ENCODE measurements at regions of chr4 and their contacts with region 1.

Region 1: GRCh38 chr4:122666527-122667245 is 45.8 kb upstream of the IL21 start:
- DNase-seq: peak; percentile 41
- ATAC-seq: peak; percentile 58
- H3K4me3 Mint-ChIP-seq: peak overlapping the region; percentile 27
- H3K27ac Mint-ChIP-seq: peak overlapping the region; percentile 95
- H3K4me1 Mint-ChIP-seq: peaks cover 82% of the 10 kb centered on the region
- H3K27me3 Mint-ChIP-seq: no peaks in the 10 kb centered on the region

Region 2: GRCh38 chr4:122508083-122508482 is 158.6 kb before region 1 on chr4:
- CTCF ChIA-PET with region 1: no interaction called
- POLR2A ChIA-PET with region 1: no interaction called
- intact Hi-C with region 1: loop called in 1 of 2 experiments (anchors 2 kb)
- DNase-seq: no peak
- ATAC-seq: peak; percentile 77
- H3K4me3 Mint-ChIP-seq: peak overlapping the region; percentile 64
- H3K27ac Mint-ChIP-seq: peak overlapping the region; percentile 92
- H3K4me1 Mint-ChIP-seq: peaks cover 84% of the 10 kb centered on the region
- H3K27me3 Mint-ChIP-seq: peaks cover 2% of the 10 kb centered on the region

Region 3: GRCh38 chr4:122542411-122543236 is 124.1 kb before region 1 on chr4:
- CTCF ChIA-PET with region 1: no interaction called
- POLR2A ChIA-PET with region 1: no interaction called
- intact Hi-C with region 1: loop called (anchors 2 to 5 kb)
- DNase-seq: no peak
- ATAC-seq: peak; percentile 63
- H3K4me3 Mint-ChIP-seq: peak overlapping the region; percentile 53
- H3K27ac Mint-ChIP-seq: peak overlapping the region; percentile 95
- H3K4me1 Mint-ChIP-seq: peaks cover 94% of the 10 kb centered on the region
- H3K27me3 Mint-ChIP-seq: no peaks in the 10 kb centered on the region

Region 4: DNA sequence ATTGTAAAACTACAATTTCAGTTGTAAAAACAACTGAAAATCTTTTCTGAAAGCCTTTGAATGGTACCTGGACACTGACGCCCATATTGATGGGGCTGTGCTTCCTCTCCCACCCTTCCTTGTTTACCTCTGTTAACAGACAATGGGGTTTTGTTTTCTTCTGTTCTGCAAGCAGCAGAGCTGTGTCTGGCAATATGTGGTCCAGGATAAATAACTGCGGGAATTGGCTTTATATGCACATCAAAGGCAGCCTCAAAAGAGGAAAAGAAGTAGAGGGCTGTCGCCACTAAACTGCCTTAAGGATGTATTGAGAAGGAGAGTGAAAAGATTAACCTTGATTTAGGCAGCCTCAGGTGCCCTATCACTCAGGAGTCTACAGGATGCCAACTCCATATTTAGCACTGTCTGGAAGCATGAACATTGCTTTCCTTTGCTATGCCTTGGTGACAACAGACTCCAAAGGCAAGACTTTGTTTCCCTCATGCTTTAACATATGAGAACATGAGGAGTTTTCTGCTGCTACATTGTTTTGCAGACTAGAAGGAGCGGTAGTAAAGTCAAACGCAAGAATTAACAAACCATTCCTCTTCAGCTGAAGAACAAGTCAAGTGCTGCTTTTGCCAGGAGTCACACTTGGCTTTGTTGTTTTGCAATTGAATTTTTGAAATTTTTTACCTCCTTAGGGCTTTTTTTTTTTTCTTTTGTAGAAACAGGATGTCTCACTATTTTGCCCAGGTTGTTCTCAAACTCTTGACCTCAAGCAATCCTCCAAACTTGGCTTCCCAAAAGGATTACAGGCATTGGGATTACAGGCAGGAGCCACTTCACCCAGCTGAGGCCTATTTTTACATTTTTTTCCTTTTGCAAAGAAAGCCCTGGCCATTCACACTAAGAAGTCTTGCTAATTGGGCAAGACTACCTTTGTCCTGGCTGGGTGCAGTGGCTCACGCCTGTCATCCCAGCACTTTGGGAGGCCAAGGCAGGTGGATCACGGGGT is 48.8 kb before region 1 on chr4:
- CTCF ChIA-PET with region 1: interaction called, 4 read pairs
- POLR2A ChIA-PET with region 1: no interaction called
- intact Hi-C with region 1: loop called (anchors 1 to 2 kb)
- DNase-seq: no peak
- ATAC-seq: no peak
- H3K4me3 Mint-ChIP-seq: peak overlapping the region; percentile 80
- H3K27ac Mint-ChIP-seq: peak overlapping the region; percentile 87
- H3K4me1 Mint-ChIP-seq: peaks cover 62% of the 10 kb centered on the region
- H3K27me3 Mint-ChIP-seq: no peaks in the 10 kb centered on the region

Region 5: GRCh38 chr4:122689972-122690371 is 23.3 kb after region 1 on chr4:
- CTCF ChIA-PET with region 1: interaction called, 4 read pairs
- POLR2A ChIA-PET with region 1: no interaction called
- intact Hi-C with region 1: loop called in 1 of 2 experiments (anchors 2 kb)
- DNase-seq: peak; percentile 49
- ATAC-seq: peak; percentile 81
- H3K4me3 Mint-ChIP-seq: no peak overlapping the region
- H3K27ac Mint-ChIP-seq: peak overlapping the region; percentile 58
- H3K4me1 Mint-ChIP-seq: peaks cover 68% of the 10 kb centered on the region
- H3K27me3 Mint-ChIP-seq: peaks cover 4% of the 10 kb centered on the region

Region 6: DNA sequence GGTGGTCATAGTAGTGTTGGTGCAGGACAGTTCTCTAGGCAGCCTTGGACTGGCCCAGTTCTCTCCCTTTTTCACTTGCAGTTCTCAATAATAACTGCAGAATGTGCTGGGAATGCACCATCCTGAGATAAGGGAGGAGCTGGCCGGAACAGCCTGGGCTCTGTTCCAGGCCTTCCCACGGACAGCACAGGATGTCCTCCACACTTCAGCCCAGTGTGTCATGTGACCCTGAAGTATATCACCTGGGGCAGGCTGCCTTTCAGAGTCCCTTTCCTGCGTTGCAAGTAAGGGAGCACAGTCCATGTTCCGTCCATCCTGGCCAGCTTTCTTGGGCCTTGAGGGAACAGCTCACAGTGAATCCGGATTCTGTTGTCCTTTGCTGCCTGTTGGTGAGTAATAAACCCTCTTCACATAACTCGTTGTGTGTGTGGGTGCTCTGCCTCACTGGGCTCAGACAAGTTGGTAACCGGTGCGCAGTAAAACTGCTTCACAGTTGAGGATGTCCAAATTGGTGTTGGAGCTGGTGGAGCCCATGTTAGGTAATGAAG is 33.6 kb after region 1 on chr4:
- CTCF ChIA-PET with region 1: interaction called, 3 read pairs
- POLR2A ChIA-PET with region 1: interaction called, 5 read pairs
- intact Hi-C with region 1: loop called (anchors 1 kb)
- DNase-seq: no peak
- ATAC-seq: peak; percentile 8
- H3K4me3 Mint-ChIP-seq: peak overlapping the region; percentile 71
- H3K27ac Mint-ChIP-seq: peak overlapping the region; percentile 93
- H3K4me1 Mint-ChIP-seq: peaks cover 59% of the 10 kb centered on the region
- H3K27me3 Mint-ChIP-seq: peaks cover 5% of the 10 kb centered on the region